ENCODE measurements at regions of chr14 and their contacts with region 1.

Region 1: GRCh38 chr14:45253068-45253753 is at the start of gene MIS18BP1:
- H3K4me3 Mint-ChIP-seq: peak within 1 kb of the TSS; percentile 89
- H3K27ac Mint-ChIP-seq: peak within 1 kb of the TSS; percentile 97
- H3K4me1 Mint-ChIP-seq: peaks cover 28% of the 10 kb centered on the region
- H3K27me3 Mint-ChIP-seq: no peaks in the 10 kb centered on the region

Region 2: GRCh38 chr14:44741431-44741830 is 511.8 kb before region 1 on chr14:
- intact Hi-C with region 1: no loop called
- H3K4me3 Mint-ChIP-seq: no peak overlapping the region
- H3K27ac Mint-ChIP-seq: no peak overlapping the region
- H3K4me1 Mint-ChIP-seq: no peaks in the 10 kb centered on the region
- H3K27me3 Mint-ChIP-seq: no peaks in the 10 kb centered on the region

Region 3: DNA sequence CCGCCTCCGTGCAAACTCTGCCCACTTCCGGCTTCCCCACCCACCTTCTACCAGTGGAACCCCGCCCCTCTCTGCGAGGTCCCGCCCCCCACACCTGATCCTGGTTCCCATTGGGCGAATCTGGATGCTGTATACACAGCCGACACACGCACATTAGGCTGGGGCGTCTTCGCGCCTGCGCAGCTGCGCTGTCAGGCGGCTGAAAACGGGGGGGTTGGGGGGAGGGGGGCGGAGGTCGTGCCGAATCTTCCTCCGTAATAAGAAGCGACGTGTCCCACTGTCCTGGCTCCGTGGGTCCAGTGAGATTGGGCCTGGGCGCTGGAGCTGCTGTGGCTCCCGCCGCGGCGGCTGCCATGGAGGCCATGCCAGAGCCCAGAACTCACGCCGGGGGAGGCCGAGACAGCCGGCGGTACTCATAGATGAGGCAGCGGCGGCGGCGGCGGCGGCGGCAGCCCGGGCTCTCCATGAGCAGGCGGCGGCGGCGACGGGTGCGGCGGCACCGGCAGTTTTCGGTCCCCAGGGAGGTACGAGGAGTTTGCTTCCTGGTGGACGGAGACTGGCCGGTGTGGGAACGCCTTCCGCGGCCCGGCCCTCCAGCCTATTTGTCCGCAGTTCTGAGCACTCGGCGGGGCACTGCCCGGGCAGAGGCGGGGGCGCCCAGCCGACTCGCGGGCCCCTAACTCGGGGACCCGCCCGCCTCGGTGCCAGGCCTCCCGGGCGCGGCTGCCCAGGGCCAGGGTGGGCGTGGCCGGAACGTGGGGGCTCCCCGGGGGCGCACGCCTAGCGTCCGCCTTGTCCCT is 356.0 kb before region 1 on chr14:
- intact Hi-C with region 1: loop called (anchors 1 kb)
- H3K4me3 Mint-ChIP-seq: peak overlapping the region; percentile 93
- H3K27ac Mint-ChIP-seq: peak overlapping the region; percentile 93
- H3K4me1 Mint-ChIP-seq: peaks cover 14% of the 10 kb centered on the region
- H3K27me3 Mint-ChIP-seq: no peaks in the 10 kb centered on the region

Region 4: GRCh38 chr14:44961604-44962333 is 291.4 kb before region 1 on chr14 and contains the starts of genes KLHL28 and TOGARAM1:
- intact Hi-C with region 1: loop called (anchors 1 kb)
- H3K4me3 Mint-ChIP-seq: no peak within 1 kb of the TSS
- H3K27ac Mint-ChIP-seq: no peak within 1 kb of the TSS
- H3K4me1 Mint-ChIP-seq: peaks cover 43% of the 10 kb centered on the region
- H3K27me3 Mint-ChIP-seq: no peaks in the 10 kb centered on the region

Region 5: GRCh38 chr14:45083971-45084722 is 169.1 kb before region 1 on chr14 and contains the start of gene PRPF39:
- intact Hi-C with region 1: loop called (anchors 1 kb)
- H3K4me3 Mint-ChIP-seq: peak within 1 kb of the TSS; percentile 97
- H3K27ac Mint-ChIP-seq: peak within 1 kb of the TSS; percentile 96
- H3K4me1 Mint-ChIP-seq: peaks cover 39% of the 10 kb centered on the region
- H3K27me3 Mint-ChIP-seq: peaks cover 9% of the 10 kb centered on the region

Region 6: DNA sequence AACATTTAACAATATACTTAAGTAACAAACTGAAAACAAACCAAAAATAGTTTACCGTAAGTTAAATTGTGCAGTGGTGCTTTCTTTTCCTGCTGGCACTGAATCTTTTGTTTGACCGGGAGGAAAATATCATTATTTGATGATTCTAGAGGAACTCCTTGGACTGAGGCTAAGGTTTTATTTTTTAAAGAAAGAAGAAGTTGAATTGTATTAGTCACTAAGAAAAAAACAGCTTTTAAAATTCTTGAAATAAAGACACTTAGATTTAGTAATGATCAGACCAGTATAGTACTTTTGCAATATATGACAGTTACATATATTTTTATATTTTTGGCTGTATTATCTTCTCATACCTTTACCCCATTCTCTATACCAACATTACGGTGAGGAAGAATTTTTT is 10.5 kb before region 1 on chr14:
- intact Hi-C with region 1: no loop called
- H3K4me3 Mint-ChIP-seq: peak overlapping the region; percentile 20
- H3K27ac Mint-ChIP-seq: peak overlapping the region; percentile 68
- H3K4me1 Mint-ChIP-seq: peaks cover 21% of the 10 kb centered on the region
- H3K27me3 Mint-ChIP-seq: no peaks in the 10 kb centered on the region